ENCODE measurements at regions of chr1 and their contacts with region 1.

Region 1: GRCh38 chr1:40338745-40339424 is 21.8 kb upstream of the COL9A2 start:
- DNase-seq: peak; percentile 82 to 92
- ATAC-seq: peak; percentile 88
- H3K4me3 ChIP-seq: no peak overlapping the region
- H3K27ac ChIP-seq: no peak overlapping the region
- H3K4me1 ChIP-seq: no peaks in the 10 kb centered on the region
- H3K27me3 ChIP-seq: no peaks in the 10 kb centered on the region

Region 2: DNA sequence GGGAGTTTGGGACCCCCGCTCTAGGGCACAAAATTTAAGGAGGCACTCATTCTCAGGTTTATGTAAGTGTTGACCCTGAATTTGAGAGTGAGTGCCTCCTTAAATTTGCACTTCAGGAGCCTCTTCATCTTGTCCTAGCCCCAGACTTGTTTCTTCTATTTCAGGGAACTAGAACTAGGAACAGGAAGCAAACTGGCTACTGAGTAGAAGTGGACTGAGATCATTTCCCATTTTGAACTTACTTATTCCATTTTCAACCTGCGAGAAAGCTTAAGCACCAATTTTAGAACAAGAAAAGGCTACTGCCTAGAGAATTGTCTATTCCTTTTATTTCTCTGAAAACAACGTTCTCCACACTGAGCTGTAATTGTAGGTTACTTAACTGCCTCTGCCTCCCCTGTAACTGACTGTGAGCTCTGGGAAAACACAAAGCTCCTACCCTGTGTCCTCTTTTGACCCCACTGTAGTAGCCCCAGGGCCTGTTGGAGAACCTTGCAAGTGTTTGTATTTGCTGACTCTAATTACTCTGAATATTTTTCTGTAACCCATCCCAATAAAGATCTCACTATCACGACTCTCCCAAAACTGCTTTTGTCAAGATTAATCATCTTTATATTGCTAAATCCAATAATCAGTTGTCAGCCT is 244.3 kb before region 1 on chr1:
- intact Hi-C with region 1: loop called (anchors 5 kb)
- DNase-seq: no peak
- ATAC-seq: no peak
- H3K4me3 ChIP-seq: no peak overlapping the region
- H3K27ac ChIP-seq: no peak overlapping the region
- H3K4me1 ChIP-seq: peaks cover 0 to 2% of the 10 kb centered on the region in 2 donors
- H3K27me3 ChIP-seq: no peaks in the 10 kb centered on the region

Region 3: GRCh38 chr1:40143891-40144575 is 194.9 kb before region 1 on chr1:
- intact Hi-C with region 1: loop called (anchors 2 kb)
- DNase-seq: peak in 1 of 2 donors; percentile 46
- ATAC-seq: peak; percentile 74
- H3K4me3 ChIP-seq: no peak overlapping the region
- H3K27ac ChIP-seq: no peak overlapping the region
- H3K4me1 ChIP-seq: no peaks in the 10 kb centered on the region
- H3K27me3 ChIP-seq: no peaks in the 10 kb centered on the region

Region 4: GRCh38 chr1:40153073-40153770 is 185.7 kb before region 1 on chr1:
- intact Hi-C with region 1: loop called (anchors 1 to 2 kb)
- DNase-seq: no peak
- ATAC-seq: no peak
- H3K4me3 ChIP-seq: no peak overlapping the region
- H3K27ac ChIP-seq: no peak overlapping the region
- H3K4me1 ChIP-seq: no peaks in the 10 kb centered on the region
- H3K27me3 ChIP-seq: no peaks in the 10 kb centered on the region

Region 5: DNA sequence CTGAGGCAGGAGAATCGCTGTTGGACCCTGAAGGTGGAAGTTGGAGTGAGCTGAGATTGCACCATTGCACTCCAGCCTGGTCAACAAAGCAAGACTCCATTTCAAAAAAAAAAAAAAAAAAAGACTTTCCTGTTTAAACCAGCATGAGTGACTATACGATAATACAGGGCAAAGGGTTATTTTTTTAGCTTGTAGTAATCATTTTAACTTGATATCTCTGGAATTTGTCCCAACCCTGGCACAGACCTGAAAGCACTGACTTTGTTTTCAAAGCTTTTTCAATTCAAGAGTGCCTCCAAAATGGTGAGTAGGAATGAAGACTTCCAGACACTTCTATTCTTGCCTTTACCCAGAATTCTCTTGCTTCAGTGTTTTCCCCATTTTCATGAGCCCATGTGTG is 95.5 kb before region 1 on chr1:
- intact Hi-C with region 1: no loop called
- DNase-seq: no peak
- ATAC-seq: no peak
- H3K4me3 ChIP-seq: no peak overlapping the region
- H3K27ac ChIP-seq: peak overlapping the region in 1 of 2 donors; percentile 30
- H3K4me1 ChIP-seq: peaks cover 0 to 5% of the 10 kb centered on the region in 2 donors
- H3K27me3 ChIP-seq: no peaks in the 10 kb centered on the region